ENCODE measurements at regions of chr12 and their contacts with region 1.

Region 1: GRCh38 chr12:121793838-121794533 is 498 bp upstream of the RHOF start:
- DNase-seq: peak; percentile 89
- ATAC-seq: peak; percentile 76
- H3K4me3 ChIP-seq: peak overlapping the region; percentile 48
- H3K27ac ChIP-seq: peak overlapping the region; percentile 28
- H3K4me1 ChIP-seq: peaks cover 26% of the 10 kb centered on the region
- H3K27me3 ChIP-seq: no peaks in the 10 kb centered on the region
- CTCF ChIP-seq: peak; percentile 100
- POLR2A ChIP-seq: peak; percentile 38
- RAD21 ChIP-seq: peak; percentile 95

Region 2: DNA sequence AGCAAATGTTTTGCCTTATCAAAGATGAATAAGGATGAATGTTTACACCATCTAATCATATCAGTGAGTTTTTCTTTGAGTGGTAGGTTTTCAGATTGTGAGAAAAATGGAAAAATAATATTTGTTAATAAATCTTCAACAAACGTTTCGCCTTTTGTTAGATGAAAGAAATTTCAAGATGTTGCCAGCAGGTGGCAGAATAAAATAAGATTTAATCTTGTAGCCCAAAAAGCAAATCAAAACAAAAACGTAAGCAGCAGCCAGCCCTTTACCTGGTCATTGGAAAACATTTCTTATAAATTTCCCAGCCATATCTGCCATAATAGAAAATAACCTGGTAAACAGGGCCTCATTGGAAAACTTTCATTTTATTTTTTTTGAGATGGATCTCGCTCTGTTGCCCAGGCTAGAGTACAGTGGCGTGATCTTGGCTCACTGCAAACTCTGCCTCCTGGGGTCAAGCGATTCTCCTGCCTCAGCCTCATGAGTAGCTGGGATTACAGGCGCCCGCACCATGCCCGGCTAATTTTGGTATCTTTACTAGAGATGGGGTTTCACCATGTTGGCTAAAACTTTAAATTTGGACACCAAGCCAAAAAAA is 96.8 kb before region 1 on chr12:
- CTCF ChIA-PET with region 1: interaction called, 10 read pairs
- POLR2A ChIA-PET with region 1: no interaction called
- dilution Hi-C with region 1: no loop called
- in situ Hi-C with region 1: no loop called
- intact Hi-C with region 1: loop called (anchors 1 kb)
- DNase-seq: peak; percentile 53
- ATAC-seq: peak; percentile 59
- H3K4me3 ChIP-seq: no peak overlapping the region
- H3K27ac ChIP-seq: no peak overlapping the region
- H3K4me1 ChIP-seq: no peaks in the 10 kb centered on the region
- H3K27me3 ChIP-seq: peaks cover 2% of the 10 kb centered on the region; the same call in 1 of the 2 replicates
- CTCF ChIP-seq: peak; percentile 65
- POLR2A ChIP-seq: no peak
- RAD21 ChIP-seq: peak; percentile 72

Region 3: DNA sequence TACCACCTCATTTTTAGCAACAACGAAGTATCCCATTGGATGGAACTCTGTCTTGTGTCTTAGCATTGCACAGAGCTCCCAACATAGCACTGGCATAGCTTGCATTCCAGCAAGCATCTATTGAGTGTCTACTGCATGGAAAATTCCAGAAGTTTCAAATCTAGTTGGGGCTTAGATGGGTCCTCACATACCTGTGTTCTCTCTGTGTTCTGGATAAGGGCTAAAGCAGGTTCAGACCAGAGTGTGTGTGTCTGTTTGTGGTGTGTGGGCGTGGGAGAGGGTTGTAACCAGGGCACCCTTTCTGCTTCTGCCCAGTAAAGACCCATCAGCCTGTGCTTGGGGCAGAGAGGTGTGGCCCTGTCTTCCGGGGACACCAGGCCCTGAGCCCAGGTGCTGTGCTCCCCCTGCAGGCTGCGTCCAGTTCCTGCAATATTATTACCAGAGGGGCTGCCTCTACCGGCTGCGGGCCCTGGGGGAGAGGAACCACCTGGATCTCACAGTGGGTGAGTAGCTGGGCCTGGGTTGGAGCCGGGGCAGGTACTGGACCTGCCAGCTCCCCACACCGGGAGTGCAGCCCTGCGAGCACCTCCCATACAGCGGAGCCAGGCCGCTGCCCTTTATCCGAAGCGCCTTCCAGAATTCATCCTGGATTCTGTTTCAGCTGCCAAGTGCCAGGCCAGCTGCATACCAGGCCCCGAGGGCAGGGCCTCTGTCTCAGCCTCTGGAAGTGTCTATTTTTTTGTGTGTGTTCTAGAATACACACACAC is 20.8 kb before region 1 on chr12:
- CTCF ChIA-PET with region 1: interaction called, 7 read pairs
- POLR2A ChIA-PET with region 1: interaction called, 5 read pairs
- dilution Hi-C with region 1: no loop called
- in situ Hi-C with region 1: no loop called
- intact Hi-C with region 1: loop called (anchors 1 kb)
- DNase-seq: peak; percentile 58
- ATAC-seq: peak; percentile 86
- H3K4me3 ChIP-seq: no peak overlapping the region
- H3K27ac ChIP-seq: no peak overlapping the region
- H3K4me1 ChIP-seq: peaks cover 6% of the 10 kb centered on the region
- H3K27me3 ChIP-seq: no peaks in the 10 kb centered on the region
- CTCF ChIP-seq: peak; percentile 85
- POLR2A ChIP-seq: no peak
- RAD21 ChIP-seq: peak; percentile 93

Region 4: DNA sequence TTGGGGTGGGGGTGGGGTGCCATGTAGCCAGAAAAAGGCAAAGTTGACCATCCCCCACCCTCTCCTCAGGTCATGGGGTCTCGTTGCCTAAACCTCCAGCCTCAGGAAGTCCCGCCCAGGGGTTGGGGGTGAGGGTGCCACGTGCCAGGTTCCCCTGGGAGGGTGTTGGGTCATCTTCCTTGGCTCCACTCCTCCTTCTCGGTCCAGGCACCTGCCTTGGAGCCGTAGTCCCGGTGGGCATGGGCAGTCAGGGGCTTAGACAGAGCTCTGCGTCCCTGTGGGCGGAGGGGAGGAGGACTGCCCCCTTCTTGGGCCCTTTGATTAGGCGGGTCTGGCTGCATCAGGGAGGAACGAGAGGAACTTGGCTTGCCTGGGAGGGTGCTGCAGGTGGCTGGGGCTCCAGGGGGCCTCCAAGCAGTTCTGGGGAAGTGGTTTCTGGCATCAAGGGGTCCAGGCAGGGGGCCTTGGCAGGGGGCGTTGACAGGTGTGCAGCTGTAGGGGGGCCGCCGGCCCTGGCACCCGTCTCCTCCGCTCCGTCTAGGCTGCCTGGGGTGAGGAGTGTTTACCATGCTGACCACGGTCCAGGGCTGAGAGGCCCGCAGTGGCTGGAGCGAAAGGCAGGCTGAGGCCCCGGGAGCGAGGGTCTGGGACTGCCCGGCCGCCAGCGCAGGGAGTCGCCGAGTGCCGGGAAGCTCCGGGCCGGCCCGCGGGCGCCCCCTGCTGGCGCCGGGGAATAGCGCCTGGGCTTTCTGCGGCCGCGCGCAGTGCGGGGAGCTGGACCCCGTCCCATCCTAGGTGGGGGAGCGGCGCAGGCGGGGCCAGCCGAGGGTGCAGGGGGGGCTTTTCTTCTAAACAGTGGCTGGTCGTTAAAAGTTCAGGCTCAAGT is 17.7 kb after region 1 on chr12:
- CTCF ChIA-PET with region 1: interaction called, 49 read pairs
- POLR2A ChIA-PET with region 1: interaction called, 10 read pairs
- dilution Hi-C with region 1: no loop called
- in situ Hi-C with region 1: no loop called
- intact Hi-C with region 1: loop called (anchors 1 kb)
- DNase-seq: peak; percentile 66
- ATAC-seq: peak; percentile 86
- H3K4me3 ChIP-seq: peak overlapping the region; percentile 50
- H3K27ac ChIP-seq: peak overlapping the region; percentile 58
- H3K4me1 ChIP-seq: peaks cover 19% of the 10 kb centered on the region
- H3K27me3 ChIP-seq: no peaks in the 10 kb centered on the region
- CTCF ChIP-seq: peak; percentile 94
- POLR2A ChIP-seq: no peak
- RAD21 ChIP-seq: peak; percentile 88

Region 5: GRCh38 chr12:121894633-121895032 is 100.6 kb after region 1 on chr12:
- CTCF ChIA-PET with region 1: interaction called, 22 read pairs
- POLR2A ChIA-PET with region 1: no interaction called
- dilution Hi-C with region 1: no loop called
- in situ Hi-C with region 1: no loop called
- intact Hi-C with region 1: no loop called
- DNase-seq: peak; percentile 52
- ATAC-seq: no peak
- H3K4me3 ChIP-seq: no peak overlapping the region
- H3K27ac ChIP-seq: peak overlapping the region; percentile 28; the same call in 1 of the 2 replicates
- H3K4me1 ChIP-seq: peaks cover 17% of the 10 kb centered on the region
- H3K27me3 ChIP-seq: no peaks in the 10 kb centered on the region
- CTCF ChIP-seq: peak; percentile 31
- POLR2A ChIP-seq: no peak
- RAD21 ChIP-seq: no peak